GM10248 (cell line): ENCODE measurements at regions of chr7 and their contacts with region 1.

Region 1: GRCh38 chr7:90759710-90760109 is 163.6 kb downstream of the CDK14 start:
- DNase-seq: no peak
- CTCF ChIP-seq: no peak

Region 2: GRCh38 chr7:90749262-90749661 is 10.4 kb before region 1 on chr7:
- CTCF ChIA-PET with region 1: interaction called, 16 read pairs
- POLR2A ChIA-PET with region 1: no interaction called
- DNase-seq: no peak
- CTCF ChIP-seq: no peak